Endothelial cell of umbilical vein (primary cell): ENCODE measurements at regions of chr5 and their contacts with region 1.

Region 1: GRCh38 chr5:170747851-170748250 is 35.7 kb upstream of the GABRP start:
- DNase-seq: peak; percentile 29
- H3K4me3 ChIP-seq: no peak overlapping the region
- H3K27ac ChIP-seq: no peak overlapping the region
- H3K4me1 ChIP-seq: peaks cover 6% of the 10 kb centered on the region
- H3K27me3 ChIP-seq: peaks cover 5 to 6% of the 10 kb centered on the region in 2 experiments
- CTCF ChIP-seq: peak; percentile 39 to 70
- POLR2A ChIP-seq: no peak

Region 2: DNA sequence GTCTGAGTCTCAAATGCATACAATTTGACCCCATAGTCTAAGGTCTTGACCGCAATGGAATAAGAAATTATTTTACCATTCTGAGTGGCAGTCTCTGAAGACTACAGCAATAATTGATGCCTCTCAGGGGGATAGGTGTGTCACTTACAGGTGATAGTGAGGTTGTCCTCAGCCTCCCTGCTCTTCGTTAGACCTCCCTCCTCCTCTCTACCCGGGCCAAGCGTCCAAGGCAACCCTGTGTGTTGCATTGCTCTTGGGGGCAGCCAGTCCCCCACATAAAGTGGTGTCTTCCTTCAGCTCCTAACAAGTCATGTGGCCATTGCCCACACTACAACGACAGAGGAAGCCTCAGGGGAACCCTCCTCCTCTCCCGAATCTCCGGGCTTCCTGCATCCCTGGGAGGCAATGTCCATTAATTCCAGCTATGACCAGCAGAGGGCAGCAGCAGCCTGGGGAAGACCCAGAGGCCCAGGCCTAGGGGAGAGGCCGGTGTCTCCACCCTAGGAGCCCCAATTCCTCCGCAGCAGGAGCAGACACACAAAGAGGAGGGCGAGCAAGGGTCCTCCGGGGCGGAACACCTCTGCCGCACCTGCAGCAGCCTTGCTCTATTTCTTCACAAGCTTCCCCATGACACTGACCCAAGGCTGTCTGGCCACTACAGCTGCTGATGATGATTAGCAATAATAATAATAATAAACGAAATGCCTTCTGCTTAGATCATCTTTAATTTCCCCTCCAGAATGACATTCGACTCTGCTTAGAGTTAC is 109.2 kb before region 1 on chr5:
- CTCF ChIA-PET with region 1: interaction called, 16 read pairs
- POLR2A ChIA-PET with region 1: no interaction called
- dilution Hi-C with region 1: no loop called
- intact Hi-C with region 1: loop called (anchors 1 kb)
- DNase-seq: peak; percentile 44
- H3K4me3 ChIP-seq: no peak overlapping the region
- H3K27ac ChIP-seq: no peak overlapping the region
- H3K4me1 ChIP-seq: peaks cover 14% of the 10 kb centered on the region
- H3K27me3 ChIP-seq: peaks cover 2 to 5% of the 10 kb centered on the region in 2 experiments
- CTCF ChIP-seq: peak; percentile 79 to 83
- POLR2A ChIP-seq: no peak

Region 3: DNA sequence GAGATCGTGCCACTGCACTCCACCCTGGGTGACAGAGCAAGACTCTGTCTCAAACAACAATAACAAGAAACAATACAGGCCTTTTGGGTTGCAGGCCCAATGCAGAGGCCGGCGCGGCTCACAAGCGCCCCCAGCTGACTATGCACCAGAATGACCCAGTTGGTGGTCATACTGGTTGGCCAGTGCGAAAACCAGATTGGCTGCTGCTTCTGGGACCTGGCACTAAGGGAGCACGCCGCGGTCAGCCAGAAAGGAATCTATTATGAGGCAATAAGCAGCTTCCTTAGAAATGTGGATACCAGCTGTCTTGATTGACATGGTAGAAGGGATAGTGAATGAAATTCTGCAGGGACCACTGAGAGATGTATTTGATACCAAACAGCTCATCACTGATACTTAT is 148.9 kb after region 1 on chr5:
- CTCF ChIA-PET with region 1: interaction called, 23 read pairs
- POLR2A ChIA-PET with region 1: no interaction called
- dilution Hi-C with region 1: no loop called
- intact Hi-C with region 1: loop called (anchors 1 kb)
- DNase-seq: peak; percentile 9
- H3K4me3 ChIP-seq: no peak overlapping the region
- H3K27ac ChIP-seq: no peak overlapping the region
- H3K4me1 ChIP-seq: peaks cover 6% of the 10 kb centered on the region
- H3K27me3 ChIP-seq: no peaks in the 10 kb centered on the region
- CTCF ChIP-seq: peak; percentile 49 to 63
- POLR2A ChIP-seq: no peak

Region 4: DNA sequence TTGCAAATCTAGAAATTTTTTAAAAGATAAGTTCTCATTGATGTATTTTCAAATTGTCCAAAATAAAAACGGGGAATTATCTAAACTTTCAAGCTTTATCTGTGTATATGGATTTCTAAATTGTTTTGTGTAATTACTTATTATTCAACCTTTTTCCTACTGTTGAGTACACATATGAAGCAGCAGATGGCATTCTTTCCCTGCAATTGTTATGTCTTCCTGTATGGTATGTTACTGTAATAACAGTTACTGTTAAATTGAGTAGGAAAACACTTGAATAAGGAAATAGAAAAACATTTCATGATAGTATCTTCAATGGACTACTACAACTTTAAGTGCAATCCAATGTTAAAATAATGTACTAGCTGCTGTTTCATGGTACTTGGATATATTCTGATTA is 238.7 kb after region 1 on chr5:
- CTCF ChIA-PET with region 1: interaction called, 3 read pairs
- POLR2A ChIA-PET with region 1: no interaction called
- dilution Hi-C with region 1: no loop called
- intact Hi-C with region 1: loop called (anchors 2 kb)
- DNase-seq: peak; percentile 78
- H3K4me3 ChIP-seq: no peak overlapping the region
- H3K27ac ChIP-seq: no peak overlapping the region
- H3K4me1 ChIP-seq: peaks cover 7% of the 10 kb centered on the region
- H3K27me3 ChIP-seq: no peaks in the 10 kb centered on the region
- CTCF ChIP-seq: peak in 1 of 2 donors; percentile 10
- POLR2A ChIP-seq: no peak

Region 5: DNA sequence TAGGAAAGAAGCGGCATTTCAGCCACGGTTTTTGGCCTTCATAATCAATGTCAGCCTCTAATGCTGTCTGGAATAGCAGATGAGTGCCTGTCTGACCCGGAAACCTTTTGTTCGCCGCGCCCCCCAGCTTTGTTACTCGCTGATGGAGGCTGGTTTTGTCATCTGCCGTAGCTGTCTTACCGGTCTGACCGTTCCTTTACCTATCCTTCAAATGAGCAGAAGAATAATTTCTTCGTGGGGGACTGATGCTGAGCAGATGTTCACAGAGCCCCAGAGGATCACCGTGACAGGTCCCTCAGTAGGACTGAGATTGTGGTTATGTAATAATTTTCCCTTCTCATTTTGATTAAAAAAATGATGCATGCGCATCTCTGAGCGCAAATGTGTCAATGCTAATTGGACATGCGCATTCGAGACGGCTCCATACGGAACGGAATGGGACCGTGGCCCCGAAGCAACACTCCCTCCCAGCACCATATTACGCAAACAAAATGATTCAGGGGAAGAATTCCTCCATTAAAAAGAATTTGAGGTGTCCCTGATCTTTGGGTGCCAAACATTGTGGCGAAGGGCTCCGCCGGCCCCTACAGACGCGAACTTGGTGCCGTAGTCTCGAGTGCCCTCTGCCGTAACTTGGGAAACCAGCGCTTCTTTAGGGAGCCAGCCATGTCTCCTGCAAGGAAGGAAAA is 588.8 kb after region 1 on chr5:
- CTCF ChIA-PET with region 1: interaction called, 44 read pairs
- POLR2A ChIA-PET with region 1: no interaction called
- dilution Hi-C with region 1: no loop called
- intact Hi-C with region 1: loop called (anchors 1 kb)
- DNase-seq: peak; percentile 73
- H3K4me3 ChIP-seq: peak overlapping the region; percentile 35 to 66 (median 60)
- H3K27ac ChIP-seq: no peak overlapping the region
- H3K4me1 ChIP-seq: peaks cover 7% of the 10 kb centered on the region
- H3K27me3 ChIP-seq: peaks cover 8 to 11% of the 10 kb centered on the region in 2 experiments
- CTCF ChIP-seq: peak; percentile 58 to 83
- POLR2A ChIP-seq: no peak